Breast epithelium (tissue), 4 donors: ENCODE measurements at regions of chr16 and their contacts with region 1.

Region 1: GRCh38 chr16:49866595-49867071 is 10.7 kb upstream of the ZNF423 start:
- DNase-seq: no peak
- H3K4me3 ChIP-seq: no peak overlapping the region
- H3K27ac ChIP-seq: peak overlapping the region in 1 of 2 donors; percentile 69
- H3K4me1 ChIP-seq: no peaks in the 10 kb centered on the region
- H3K27me3 ChIP-seq: no peaks in the 10 kb centered on the region
- CTCF ChIP-seq: no peak
- POLR2A ChIP-seq: no peak

Region 2: DNA sequence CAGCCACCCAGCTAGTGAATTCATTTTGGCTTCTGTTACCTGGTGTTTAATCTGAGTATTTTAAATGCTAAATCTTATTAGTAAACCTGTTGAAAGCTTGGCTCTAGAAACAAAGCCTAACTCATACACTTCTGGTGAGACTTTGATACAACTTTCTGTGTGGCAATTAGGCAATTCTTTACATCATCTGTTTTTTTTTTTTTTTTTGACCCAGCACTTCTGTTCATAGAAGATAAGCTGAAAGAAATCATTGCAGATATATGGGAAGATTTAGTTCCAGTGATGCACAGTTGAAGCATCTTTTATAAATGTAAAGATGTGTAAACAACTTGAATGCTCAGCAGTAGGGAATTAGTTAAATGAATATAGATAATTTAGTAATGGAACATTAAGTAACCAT is 1597.6 kb before region 1 on chr16:
- intact Hi-C with region 1: loop called (anchors 10 kb)
- DNase-seq: no peak
- H3K4me3 ChIP-seq: no peak overlapping the region
- H3K27ac ChIP-seq: no peak overlapping the region
- H3K4me1 ChIP-seq: peaks cover 0 to 3% of the 10 kb centered on the region in 2 donors
- H3K27me3 ChIP-seq: no peaks in the 10 kb centered on the region
- CTCF ChIP-seq: no peak
- POLR2A ChIP-seq: no peak

Region 3: DNA sequence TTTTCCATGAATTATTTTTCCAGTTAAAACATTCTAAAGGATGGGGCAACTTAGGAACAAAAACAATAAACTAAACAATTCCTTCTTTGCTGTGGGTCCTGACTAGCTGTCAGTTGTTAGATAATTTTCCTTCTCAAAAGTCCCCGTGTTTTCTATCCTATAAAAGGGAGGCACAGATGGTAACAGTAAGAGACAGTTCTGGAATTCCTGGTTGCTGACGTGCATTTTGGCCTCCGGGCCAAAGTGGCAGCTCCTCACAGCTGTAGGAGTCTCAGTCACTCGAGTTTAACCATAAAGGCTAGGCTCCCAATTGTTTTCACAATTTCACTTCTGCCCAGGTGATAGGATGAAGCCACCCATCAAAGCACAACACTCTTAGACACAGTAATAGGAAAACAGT is 66.3 kb after region 1 on chr16:
- intact Hi-C with region 1: no loop called
- DNase-seq: peak in 1 of 2 donors; percentile 21
- H3K4me3 ChIP-seq: no peak overlapping the region
- H3K27ac ChIP-seq: no peak overlapping the region
- H3K4me1 ChIP-seq: no peaks in the 10 kb centered on the region
- H3K27me3 ChIP-seq: no peaks in the 10 kb centered on the region
- CTCF ChIP-seq: no peak
- POLR2A ChIP-seq: no peak